ENCODE measurements at regions of chr20 and their contacts with region 1.

Region 1: GRCh38 chr20:13105864-13106457 is 97.2 kb downstream of the SPTLC3 start:
- DNase-seq: no peak
- H3K4me3 Mint-ChIP-seq: no peak overlapping the region
- H3K27ac Mint-ChIP-seq: no peak overlapping the region
- H3K4me1 Mint-ChIP-seq: no peaks in the 10 kb centered on the region
- H3K27me3 Mint-ChIP-seq: no peaks in the 10 kb centered on the region

Region 2: GRCh38 chr20:11676630-11677284 is 1429.2 kb before region 1 on chr20:
- CTCF ChIA-PET with region 1: no interaction called
- intact Hi-C with region 1: loop called (anchors 10 kb)
- DNase-seq: peak; percentile 19
- H3K4me3 Mint-ChIP-seq: no peak overlapping the region
- H3K27ac Mint-ChIP-seq: no peak overlapping the region
- H3K4me1 Mint-ChIP-seq: no peaks in the 10 kb centered on the region
- H3K27me3 Mint-ChIP-seq: no peaks in the 10 kb centered on the region

Region 3: GRCh38 chr20:12570371-12570770 is 535.6 kb before region 1 on chr20:
- CTCF ChIA-PET with region 1: no interaction called
- intact Hi-C with region 1: loop called (anchors 10 kb)
- DNase-seq: peak; percentile 7
- H3K4me3 Mint-ChIP-seq: no peak overlapping the region
- H3K27ac Mint-ChIP-seq: no peak overlapping the region
- H3K4me1 Mint-ChIP-seq: no peaks in the 10 kb centered on the region
- H3K27me3 Mint-ChIP-seq: no peaks in the 10 kb centered on the region

Region 4: GRCh38 chr20:12925214-12925755 is 180.7 kb before region 1 on chr20:
- CTCF ChIA-PET with region 1: interaction called, 9 read pairs
- intact Hi-C with region 1: loop called (anchors 1 kb)
- DNase-seq: peak; percentile 48
- H3K4me3 Mint-ChIP-seq: no peak overlapping the region
- H3K27ac Mint-ChIP-seq: no peak overlapping the region
- H3K4me1 Mint-ChIP-seq: no peaks in the 10 kb centered on the region
- H3K27me3 Mint-ChIP-seq: peaks cover 10% of the 10 kb centered on the region

Region 5: GRCh38 chr20:13009682-13010406 is 96.1 kb before region 1 on chr20:
- CTCF ChIA-PET with region 1: no interaction called
- intact Hi-C with region 1: loop called (anchors 1 kb)
- DNase-seq: peak; percentile 15
- H3K4me3 Mint-ChIP-seq: peak overlapping the region; percentile 57
- H3K27ac Mint-ChIP-seq: peak overlapping the region; percentile 37
- H3K4me1 Mint-ChIP-seq: peaks cover 28% of the 10 kb centered on the region
- H3K27me3 Mint-ChIP-seq: no peaks in the 10 kb centered on the region